ENCODE measurements at regions of chr9 and their contacts with region 1.

Region 1: DNA sequence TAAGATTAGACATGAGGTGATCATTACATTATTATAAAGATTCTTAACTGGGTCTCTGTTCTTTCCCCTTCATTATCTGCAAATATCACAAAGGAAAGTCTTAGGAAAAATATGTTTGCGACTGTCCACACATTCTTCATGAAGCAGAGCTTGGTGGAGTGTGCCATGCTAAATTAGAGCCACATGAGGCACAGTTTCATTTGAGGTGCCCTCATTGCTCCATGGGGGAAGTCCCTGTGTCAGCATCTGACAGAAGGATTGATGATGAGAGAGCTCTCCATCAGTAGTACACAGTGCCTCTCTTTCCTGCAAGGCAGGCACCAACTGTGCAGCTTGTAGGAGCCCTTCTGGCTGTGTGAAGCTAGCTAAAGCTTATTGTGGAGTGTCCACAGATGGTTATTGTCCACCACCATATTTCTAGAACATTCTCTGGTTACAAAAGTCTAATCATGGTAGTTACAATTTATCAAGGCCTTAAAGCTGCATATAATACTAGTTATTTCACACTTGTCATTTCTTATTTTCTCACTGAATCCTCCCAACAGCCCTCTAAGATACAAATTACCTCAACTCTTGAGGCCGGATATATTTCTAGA is 63.9 kb downstream of the C9orf152 start:
- DNase-seq: no peak
- H3K4me3 Mint-ChIP-seq: peak overlapping the region; percentile 61
- H3K27ac Mint-ChIP-seq: peak overlapping the region; percentile 94
- H3K4me1 Mint-ChIP-seq: peaks cover 84% of the 10 kb centered on the region
- H3K27me3 Mint-ChIP-seq: no peaks in the 10 kb centered on the region

Region 2: GRCh38 chr9:110088099-110088498 is 55.9 kb before region 1 on chr9:
- intact Hi-C with region 1: loop called (anchors 5 kb)
- DNase-seq: no peak
- H3K4me3 Mint-ChIP-seq: no peak overlapping the region
- H3K27ac Mint-ChIP-seq: no peak overlapping the region
- H3K4me1 Mint-ChIP-seq: peaks cover 47% of the 10 kb centered on the region
- H3K27me3 Mint-ChIP-seq: no peaks in the 10 kb centered on the region

Measured in activated T-helper 1 cell treated with anti-CD3 and anti-CD28 coated beads, Interleukin-12 subunit alpha, Interleukin-12 subunit beta, Interleukin-2, Interleukin-4 antibody, amounts not matched to agents 30 ng/mL and 10 ng/mL and 1 ng/mL, durations not matched to agents 14 hours and 24 hours and 36 hours (primary cell).